ENCODE measurements at regions of chr5 and their contacts with region 1.

Region 1: DNA sequence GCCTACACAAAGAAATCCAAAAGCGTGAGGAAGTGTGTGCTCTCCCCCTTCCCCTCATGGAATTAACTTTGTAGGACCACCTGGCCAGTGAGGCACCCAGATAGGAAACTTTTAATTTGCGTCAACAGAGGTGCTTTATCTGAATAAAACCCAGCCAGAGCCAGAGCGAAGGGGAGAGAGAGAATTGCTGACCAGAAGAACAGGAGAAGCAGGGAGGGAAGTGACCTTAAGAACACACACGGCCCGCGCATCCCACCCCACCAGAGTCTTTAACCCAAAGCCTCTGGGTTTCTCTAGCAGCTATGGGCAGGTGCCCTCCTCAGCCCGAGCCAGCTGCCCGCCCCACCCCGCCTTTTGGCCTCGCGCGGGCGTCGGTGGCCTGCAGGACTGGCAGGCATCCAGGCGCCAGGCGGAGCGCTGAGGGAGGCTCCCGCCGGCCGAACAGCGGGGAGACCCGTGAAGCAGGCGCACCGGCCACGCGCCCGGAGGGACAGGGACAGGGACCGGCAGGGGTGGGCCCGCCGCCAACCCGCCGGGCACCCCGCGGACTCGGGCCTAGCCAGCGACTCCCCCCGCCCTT is 580 bp downstream of the ERAP1 start:
- DNase-seq: peak; percentile 76
- H3K4me3 ChIP-seq: peak overlapping the region; percentile 22 to 83 (median 73)
- H3K27ac ChIP-seq: peak overlapping the region; percentile 88
- H3K4me1 ChIP-seq: peaks cover 9% of the 10 kb centered on the region
- H3K27me3 ChIP-seq: no peaks in the 10 kb centered on the region
- CTCF ChIP-seq: no peak
- POLR2A ChIP-seq: no peak

Region 2: GRCh38 chr5:96745844-96746531 is 61.2 kb before region 1 on chr5:
- CTCF ChIA-PET with region 1: no interaction called
- POLR2A ChIA-PET with region 1: no interaction called
- dilution Hi-C with region 1: no loop called
- intact Hi-C with region 1: no loop called
- DNase-seq: peak; percentile 29
- H3K4me3 ChIP-seq: no peak overlapping the region
- H3K27ac ChIP-seq: peak overlapping the region; percentile 44
- H3K4me1 ChIP-seq: peaks cover 23% of the 10 kb centered on the region
- H3K27me3 ChIP-seq: no peaks in the 10 kb centered on the region
- CTCF ChIP-seq: no peak
- POLR2A ChIP-seq: no peak

Region 3: GRCh38 chr5:96823900-96824351 is 16.8 kb after region 1 on chr5:
- CTCF ChIA-PET with region 1: interaction called, 13 read pairs
- POLR2A ChIA-PET with region 1: interaction called, 9 read pairs
- dilution Hi-C with region 1: no loop called
- intact Hi-C with region 1: loop called (anchors 1 kb)
- DNase-seq: peak; percentile 60
- H3K4me3 ChIP-seq: no peak overlapping the region
- H3K27ac ChIP-seq: peak overlapping the region; percentile 19
- H3K4me1 ChIP-seq: peaks cover 20% of the 10 kb centered on the region
- H3K27me3 ChIP-seq: no peaks in the 10 kb centered on the region
- CTCF ChIP-seq: no peak
- POLR2A ChIP-seq: no peak

Region 4: DNA sequence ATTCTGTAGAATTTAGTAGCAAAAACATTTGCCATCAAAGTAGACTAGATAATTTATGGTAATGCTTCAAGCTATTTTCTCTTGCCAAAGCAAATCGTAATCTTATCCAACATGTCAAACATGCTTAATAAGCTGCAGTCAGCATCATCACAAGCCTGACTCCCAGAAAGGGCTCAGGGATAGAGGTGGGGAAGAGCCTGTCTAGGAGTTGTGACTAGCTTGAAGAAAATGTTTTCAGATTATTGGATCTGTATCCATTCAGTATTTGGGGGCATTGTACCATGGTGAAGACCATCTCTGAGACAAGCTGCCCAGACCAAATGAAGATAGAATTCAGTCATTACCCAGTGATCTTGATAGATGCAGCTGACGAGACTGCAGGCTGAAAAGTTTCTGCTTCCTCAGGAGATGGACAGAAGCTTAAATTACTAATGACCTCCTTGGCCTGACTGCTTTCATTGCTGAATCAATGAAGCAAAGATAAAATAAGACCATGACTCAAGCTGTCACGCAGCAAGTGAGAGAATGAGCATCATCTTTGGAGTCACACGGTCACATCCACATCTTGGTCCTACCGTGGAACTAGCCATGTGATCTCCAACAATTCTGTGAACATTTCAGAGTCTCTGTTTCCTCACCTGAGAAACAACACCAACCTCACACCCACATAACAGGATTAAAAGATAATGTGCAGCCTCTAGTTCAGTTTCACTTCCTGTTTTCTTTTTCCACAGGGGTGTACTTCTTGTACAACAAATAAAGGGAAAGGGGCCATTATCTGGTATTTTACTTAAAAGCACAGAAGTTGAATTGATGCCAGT is 78.6 kb after region 1 on chr5:
- CTCF ChIA-PET with region 1: no interaction called
- POLR2A ChIA-PET with region 1: no interaction called
- dilution Hi-C with region 1: no loop called
- intact Hi-C with region 1: loop called (anchors 2 kb)
- DNase-seq: no peak
- H3K4me3 ChIP-seq: no peak overlapping the region
- H3K27ac ChIP-seq: no peak overlapping the region
- H3K4me1 ChIP-seq: peaks cover 25% of the 10 kb centered on the region
- H3K27me3 ChIP-seq: no peaks in the 10 kb centered on the region
- CTCF ChIP-seq: no peak
- POLR2A ChIP-seq: no peak

Measured in endothelial cell of umbilical vein (primary cell).